ENCODE measurements at regions of chr14 and their contacts with region 1.

Region 1: DNA sequence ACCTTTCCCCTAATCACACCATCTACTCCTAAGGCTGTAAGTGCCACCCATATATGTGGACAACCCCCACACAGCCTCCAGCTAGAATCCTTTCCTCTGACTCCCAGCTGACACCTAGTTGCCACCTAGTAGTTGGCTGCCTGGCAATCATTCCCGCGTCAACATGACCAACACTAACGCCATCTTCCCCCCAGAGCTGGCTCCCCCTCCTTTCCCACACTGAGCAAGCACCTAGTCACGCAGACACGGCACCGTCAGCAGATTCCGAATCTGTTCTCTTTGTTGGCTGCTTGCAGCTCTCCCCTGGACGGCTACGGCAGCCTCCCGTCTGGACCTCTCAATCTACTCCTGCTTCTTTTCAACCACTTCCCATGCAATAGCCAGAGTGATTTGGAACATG is 27.7 kb downstream of the UBR7 start:
- DNase-seq: no peak
- ATAC-seq: peak; percentile 24; the same call in 1 of the 2 replicates
- H3K4me3 ChIP-seq: no peak overlapping the region
- H3K27ac ChIP-seq: no peak overlapping the region
- H3K4me1 ChIP-seq: peaks cover 2 to 5% of the 10 kb centered on the region in 2 experiments
- H3K27me3 ChIP-seq: no peaks in the 10 kb centered on the region
- CTCF ChIP-seq: no peak
- POLR2A ChIP-seq: no peak
- RAD21 ChIP-seq: no peak

Region 2: GRCh38 chr14:93543766-93544165 is 309.0 kb after region 1 on chr14:
- CTCF ChIA-PET with region 1: no interaction called
- POLR2A ChIA-PET with region 1: no interaction called
- RAD21 ChIA-PET with region 1: no interaction called
- intact Hi-C with region 1: loop called (anchors 2 kb)
- DNase-seq: peak; percentile 19
- ATAC-seq: peak; percentile 69
- H3K4me3 ChIP-seq: no peak overlapping the region
- H3K27ac ChIP-seq: no peak overlapping the region
- H3K4me1 ChIP-seq: no peaks in the 10 kb centered on the region
- H3K27me3 ChIP-seq: peaks cover 31% of the 10 kb centered on the region
- CTCF ChIP-seq: peak; percentile 37 to 47 (median 40); a peak in 4 of 6 replicates
- POLR2A ChIP-seq: no peak
- RAD21 ChIP-seq: peak; percentile 62

Measured in HCT116 (cell line).